ENCODE measurements at regions of chr9 and their contacts with region 1.

Region 1: DNA sequence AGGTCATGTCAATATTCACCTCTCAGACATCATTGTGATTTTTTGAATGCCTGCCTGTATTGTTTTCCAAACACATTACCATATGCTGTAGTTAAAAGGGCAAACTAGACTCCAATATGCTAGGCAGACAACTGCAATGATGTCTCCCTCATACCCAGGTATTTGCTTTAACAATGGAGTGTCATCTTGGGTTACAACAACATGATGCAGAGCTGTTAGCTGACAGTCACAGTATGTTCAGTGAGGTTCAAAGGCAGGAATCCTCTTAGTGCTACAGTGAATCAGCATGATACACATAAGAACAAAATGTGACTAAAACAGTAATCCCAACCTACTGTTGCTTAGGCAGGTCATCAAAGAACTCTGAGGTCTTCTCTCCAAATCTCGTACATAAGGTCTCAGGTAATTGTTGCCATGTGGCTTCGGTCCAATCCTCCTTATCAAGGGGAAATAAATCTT is 24.0 kb downstream of the OR1J1 start:
- DNase-seq: no peak
- H3K4me3 ChIP-seq: no peak overlapping the region
- H3K27ac ChIP-seq: no peak overlapping the region
- H3K4me1 ChIP-seq: no peaks in the 10 kb centered on the region
- H3K27me3 ChIP-seq: peaks cover 24% of the 10 kb centered on the region
- CTCF ChIP-seq: no peak

Region 2: DNA sequence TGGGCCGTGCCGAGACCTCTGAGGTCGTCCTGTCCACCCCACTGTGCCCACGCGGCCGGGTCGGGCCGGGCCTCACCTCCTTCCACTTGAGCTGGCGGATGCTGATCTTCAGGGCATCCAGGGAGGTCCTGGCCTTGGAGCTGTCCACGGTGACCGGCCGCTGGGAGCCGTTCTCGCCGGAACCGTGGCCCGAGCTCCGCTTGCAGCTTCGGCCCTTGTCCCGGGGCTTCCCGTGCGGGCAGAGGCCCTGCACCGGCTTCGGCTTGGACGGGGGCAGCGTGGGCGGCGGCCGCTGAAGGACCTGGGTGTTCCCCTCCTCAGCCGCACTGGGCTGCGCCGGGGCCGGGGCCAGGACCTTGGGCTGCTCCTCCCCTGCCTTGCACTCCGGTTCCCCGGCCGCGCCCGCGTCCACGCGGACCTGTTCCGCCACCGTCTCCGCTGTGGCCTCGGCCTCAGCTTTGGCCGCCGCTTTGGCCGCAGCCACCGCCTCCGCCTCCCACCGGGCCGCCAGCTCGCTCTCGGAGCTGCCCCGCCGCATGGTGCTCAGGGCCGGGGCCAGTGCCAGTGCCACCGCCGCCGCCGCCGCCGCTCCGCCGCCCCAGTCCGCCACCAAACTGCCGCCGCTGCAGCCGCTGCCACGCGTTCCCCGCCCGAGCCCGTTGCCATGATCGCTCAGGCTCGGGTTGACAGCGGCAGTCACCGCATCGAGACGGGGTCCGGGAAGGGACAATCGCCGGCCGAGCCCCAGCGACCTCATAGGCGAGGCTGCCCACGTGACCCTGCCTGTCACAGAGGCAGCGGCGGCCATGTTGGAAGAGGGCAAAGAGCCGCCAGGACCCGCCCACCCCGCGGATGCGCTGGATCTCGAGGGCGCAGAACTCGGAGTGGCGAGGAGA is 360.8 kb before region 1 on chr9 and contains the start of gene TTLL11:
- intact Hi-C with region 1: loop called (anchors 10 kb)
- DNase-seq: peak; percentile 98
- H3K4me3 ChIP-seq: peak within 1 kb of the TSS; percentile 83
- H3K27ac ChIP-seq: peak within 1 kb of the TSS; percentile 86
- H3K4me1 ChIP-seq: peaks cover 51% of the 10 kb centered on the region
- H3K27me3 ChIP-seq: no peaks in the 10 kb centered on the region
- CTCF ChIP-seq: no peak
- total RNA-seq, gene TTLL11: 7.3 TPM

Region 3: GRCh38 chr9:122125158-122125508 is 328.6 kb before region 1 on chr9:
- intact Hi-C with region 1: loop called (anchors 10 kb)
- DNase-seq: peak; percentile 80
- H3K4me3 ChIP-seq: no peak overlapping the region
- H3K27ac ChIP-seq: no peak overlapping the region
- H3K4me1 ChIP-seq: peaks cover 42% of the 10 kb centered on the region
- H3K27me3 ChIP-seq: peaks cover 20% of the 10 kb centered on the region
- CTCF ChIP-seq: peak; percentile 96

Region 4: GRCh38 chr9:122402403-122402871 is 51.3 kb before region 1 on chr9:
- intact Hi-C with region 1: no loop called
- DNase-seq: no peak
- H3K4me3 ChIP-seq: no peak overlapping the region
- H3K27ac ChIP-seq: no peak overlapping the region
- H3K4me1 ChIP-seq: no peaks in the 10 kb centered on the region
- H3K27me3 ChIP-seq: peaks cover 25% of the 10 kb centered on the region
- CTCF ChIP-seq: no peak

Region 5: DNA sequence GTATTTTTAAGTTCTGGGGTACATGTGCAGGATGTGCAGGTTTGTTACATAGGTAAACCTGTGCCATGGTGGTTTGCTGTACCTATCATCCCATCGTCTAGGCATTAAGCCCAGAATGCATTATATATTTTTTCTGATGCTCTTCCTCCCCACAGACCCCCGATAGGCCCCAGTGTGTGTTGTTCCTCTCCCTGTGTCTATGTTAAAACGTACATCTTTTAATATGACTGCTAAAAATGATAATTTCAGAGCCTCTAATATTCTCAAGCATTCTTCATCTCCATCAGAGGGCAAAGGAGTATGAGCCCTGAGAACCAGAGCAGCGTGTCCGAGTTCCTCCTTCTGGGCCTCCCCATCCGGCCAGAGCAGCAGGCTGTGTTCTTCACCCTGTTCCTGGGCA is 56.8 kb after region 1 on chr9 and contains the start of gene OR1J2:
- intact Hi-C with region 1: no loop called
- DNase-seq: no peak
- H3K4me3 ChIP-seq: no peak within 1 kb of the TSS
- H3K27ac ChIP-seq: no peak within 1 kb of the TSS
- H3K4me1 ChIP-seq: no peaks in the 10 kb centered on the region
- H3K27me3 ChIP-seq: peaks cover 51% of the 10 kb centered on the region
- CTCF ChIP-seq: no peak
- total RNA-seq, gene OR1J2: not detected

Measured in left ventricle myocardium inferior (tissue), 1 donor.